ENCODE measurements at regions of chrX and their contacts with region 1.

Region 1: GRCh38 chrX:120213436-120214265 is 37.0 kb upstream of the ZBTB33 start:
- DNase-seq: peak; percentile 63
- H3K4me3 ChIP-seq: no peak overlapping the region
- H3K27ac ChIP-seq: no peak overlapping the region
- H3K4me1 ChIP-seq: no peaks in the 10 kb centered on the region
- H3K27me3 ChIP-seq: no peaks in the 10 kb centered on the region
- CTCF ChIP-seq: peak; percentile 42 to 75 (median 57)
- EP300 ChIP-seq: no peak
- POLR2A ChIP-seq: no peak

Region 2: GRCh38 chrX:120036704-120037103 is 176.9 kb before region 1 on chrX:
- in situ Hi-C with region 1: no loop called
- intact Hi-C with region 1: loop called (anchors 10 kb)
- DNase-seq: no peak
- H3K4me3 ChIP-seq: no peak overlapping the region
- H3K27ac ChIP-seq: no peak overlapping the region
- H3K4me1 ChIP-seq: no peaks in the 10 kb centered on the region
- H3K27me3 ChIP-seq: no peaks in the 10 kb centered on the region
- CTCF ChIP-seq: no peak
- EP300 ChIP-seq: no peak
- POLR2A ChIP-seq: no peak

Region 3: GRCh38 chrX:120090208-120090607 is 123.4 kb before region 1 on chrX:
- in situ Hi-C with region 1: loop called in 1 of 4 experiments (anchors 25 kb)
- intact Hi-C with region 1: no loop called
- DNase-seq: no peak
- H3K4me3 ChIP-seq: no peak overlapping the region
- H3K27ac ChIP-seq: no peak overlapping the region
- H3K4me1 ChIP-seq: no peaks in the 10 kb centered on the region
- H3K27me3 ChIP-seq: no peaks in the 10 kb centered on the region
- CTCF ChIP-seq: no peak
- EP300 ChIP-seq: no peak
- POLR2A ChIP-seq: no peak

Measured in transverse colon (tissue), 4 donors.